B cell (primary cell): ENCODE measurements at regions of chr11 and their contacts with region 1.

Region 1: DNA sequence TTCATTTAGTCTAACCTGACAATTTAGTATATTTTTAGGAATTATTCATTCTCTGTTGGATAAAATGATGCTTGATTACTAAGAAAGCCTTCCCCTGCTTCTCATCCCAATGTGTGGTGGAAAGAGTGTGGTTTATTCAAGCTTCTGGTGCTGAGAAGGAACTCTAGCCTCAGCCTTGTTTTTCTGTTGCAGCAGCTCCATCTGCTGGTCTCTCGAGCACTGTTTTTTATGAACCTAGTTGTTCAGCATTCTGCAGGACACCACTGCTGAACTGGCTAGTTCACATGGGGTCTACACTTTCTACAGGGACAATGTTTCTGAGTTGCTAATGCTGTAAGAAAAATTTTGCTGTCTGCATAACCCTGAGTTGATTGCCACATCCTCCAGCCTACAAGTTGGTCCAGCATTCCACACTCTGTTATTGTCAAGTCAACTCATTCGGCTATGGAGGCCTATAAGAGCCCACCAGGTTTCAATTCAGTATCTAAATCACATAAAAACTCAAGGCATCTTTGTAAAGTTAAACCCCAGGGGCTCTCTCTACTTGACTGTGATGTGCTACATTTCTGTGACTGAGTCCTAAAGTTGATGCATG is 14.3 kb downstream of the OR2AG2 start:
- DNase-seq: peak; percentile 75
- ATAC-seq: peak; percentile 67
- H3K4me3 ChIP-seq: no peak overlapping the region
- H3K4me3 Mint-ChIP-seq: no peak overlapping the region
- H3K27ac ChIP-seq: no peak overlapping the region
- H3K27ac Mint-ChIP-seq: no peak overlapping the region
- H3K4me1 ChIP-seq: no peaks in the 10 kb centered on the region
- H3K4me1 Mint-ChIP-seq: peaks cover 2% of the 10 kb centered on the region
- H3K27me3 ChIP-seq: peaks cover 0 to 5% (median 0%) of the 10 kb centered on the region in 4 experiments
- H3K27me3 Mint-ChIP-seq: peaks cover 9% of the 10 kb centered on the region
- CTCF ChIP-seq: peak; percentile 77

Region 2: DNA sequence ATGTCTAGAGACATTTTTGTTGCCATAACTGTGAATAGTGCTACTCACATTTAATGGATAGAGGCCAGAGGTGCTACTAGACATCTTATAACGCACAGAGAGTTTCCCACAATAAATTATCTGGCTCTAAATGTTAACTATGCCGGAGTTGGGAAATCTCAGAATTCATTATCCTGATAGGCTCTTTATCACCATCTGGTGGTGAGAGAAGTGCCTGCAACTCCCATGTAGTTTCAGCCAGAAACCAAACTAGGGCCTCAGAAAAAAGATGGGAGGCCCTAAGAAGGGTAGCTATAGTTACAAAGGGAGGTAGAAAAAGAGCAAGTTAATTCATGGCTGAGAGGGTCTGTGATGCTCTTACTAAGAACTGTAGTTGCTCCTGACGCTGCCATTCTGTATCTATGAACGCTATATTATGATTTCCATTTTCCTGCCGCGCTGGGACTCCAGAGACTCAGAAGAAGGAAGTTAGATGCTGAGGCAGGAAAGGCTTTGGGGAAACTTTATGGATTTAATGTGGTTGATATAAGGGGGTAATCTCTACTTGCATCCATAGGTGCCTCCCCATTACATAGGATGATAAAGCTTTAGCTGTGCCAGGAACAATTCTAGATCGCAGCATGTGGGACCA is 51.5 kb before region 1 on chr11:
- CTCF ChIA-PET with region 1: interaction called, 158 read pairs
- POLR2A ChIA-PET with region 1: no interaction called
- intact Hi-C with region 1: loop called (anchors 1 kb)
- DNase-seq: peak; percentile 62
- ATAC-seq: peak; percentile 78
- H3K4me3 ChIP-seq: no peak overlapping the region
- H3K4me3 Mint-ChIP-seq: no peak overlapping the region
- H3K27ac ChIP-seq: peak overlapping the region in 1 of 2 donors; percentile 35
- H3K27ac Mint-ChIP-seq: peak overlapping the region; percentile 60
- H3K4me1 ChIP-seq: peaks cover 0 to 4% of the 10 kb centered on the region in 2 donors
- H3K4me1 Mint-ChIP-seq: peaks cover 21% of the 10 kb centered on the region
- H3K27me3 ChIP-seq: no peaks in the 10 kb centered on the region
- H3K27me3 Mint-ChIP-seq: no peaks in the 10 kb centered on the region
- CTCF ChIP-seq: peak; percentile 95

Region 3: DNA sequence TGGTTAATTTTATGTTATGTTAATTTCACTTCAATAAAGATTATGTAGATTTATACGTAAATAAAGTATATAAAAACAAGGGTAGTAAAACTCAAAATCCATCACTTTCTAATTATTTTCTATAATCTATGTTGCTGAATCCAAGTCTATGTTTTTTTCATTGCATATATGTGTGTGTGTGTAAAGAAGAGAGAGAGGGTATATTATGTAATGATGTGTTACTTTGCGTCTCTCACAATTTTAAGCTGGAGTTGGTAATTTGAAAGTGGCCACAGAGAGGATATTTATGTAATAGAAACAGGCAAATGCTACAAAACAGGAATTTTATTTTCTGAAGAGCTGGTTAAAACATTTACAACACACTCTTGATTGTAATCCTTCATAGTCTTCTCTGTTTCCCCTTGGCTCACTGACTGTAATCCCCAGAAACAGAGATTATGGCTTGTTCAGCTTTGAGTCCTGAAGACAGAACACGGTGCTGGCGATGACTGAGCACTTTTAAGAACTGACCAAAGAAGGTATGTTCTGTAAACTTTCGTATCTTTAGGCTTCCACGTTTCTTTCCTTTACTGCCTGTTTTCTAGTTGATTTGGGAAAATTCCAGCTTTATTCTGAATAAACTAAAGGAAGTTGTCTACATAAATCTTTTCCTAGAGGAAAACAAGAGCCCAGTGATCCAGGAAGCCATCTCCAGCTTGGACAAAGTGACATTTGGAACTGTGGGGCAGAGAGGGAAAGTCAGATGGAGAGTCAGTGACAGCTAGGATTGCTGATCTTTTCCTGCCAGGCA is 29.3 kb before region 1 on chr11:
- CTCF ChIA-PET with region 1: interaction called, 760 read pairs
- POLR2A ChIA-PET with region 1: no interaction called
- intact Hi-C with region 1: no loop called
- DNase-seq: no peak
- ATAC-seq: no peak
- H3K4me3 ChIP-seq: no peak overlapping the region
- H3K4me3 Mint-ChIP-seq: no peak overlapping the region
- H3K27ac ChIP-seq: no peak overlapping the region
- H3K27ac Mint-ChIP-seq: peak overlapping the region; percentile 46
- H3K4me1 ChIP-seq: peaks cover 0 to 6% of the 10 kb centered on the region in 2 donors
- H3K4me1 Mint-ChIP-seq: peaks cover 52% of the 10 kb centered on the region
- H3K27me3 ChIP-seq: no peaks in the 10 kb centered on the region
- H3K27me3 Mint-ChIP-seq: no peaks in the 10 kb centered on the region
- CTCF ChIP-seq: no peak

Region 4: DNA sequence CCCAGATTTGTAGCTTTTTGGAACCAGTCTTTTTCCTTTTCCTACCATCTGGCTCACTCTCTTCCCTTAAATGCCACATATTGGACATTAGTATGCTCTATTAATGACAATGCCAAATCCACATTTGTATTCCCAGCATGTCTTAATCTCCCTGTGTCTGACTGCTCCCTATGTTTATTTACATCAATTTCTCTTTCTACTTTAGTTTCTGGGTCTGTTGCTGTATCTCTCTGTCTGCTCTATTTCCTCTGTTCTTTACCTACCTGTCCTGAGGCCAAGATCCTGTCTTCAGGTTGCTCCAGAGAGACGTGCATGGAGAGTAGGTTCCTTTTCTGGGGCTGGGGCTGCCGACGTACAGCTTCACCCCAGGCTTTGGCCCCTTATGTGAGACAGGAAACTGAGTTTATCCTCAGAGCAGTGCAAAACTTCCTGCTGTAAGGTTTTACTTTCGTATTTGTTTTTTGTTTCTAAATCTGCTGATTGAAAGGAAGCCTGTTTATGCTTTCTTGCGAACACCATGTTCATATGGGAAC is 11.3 kb before region 1 on chr11:
- CTCF ChIA-PET with region 1: interaction called, 760 read pairs
- POLR2A ChIA-PET with region 1: interaction called, 9 read pairs
- intact Hi-C with region 1: loop called (anchors 1 kb)
- DNase-seq: peak; percentile 74
- ATAC-seq: peak; percentile 84
- H3K4me3 ChIP-seq: peak overlapping the region; percentile 54 to 95 (median 80)
- H3K4me3 Mint-ChIP-seq: no peak overlapping the region
- H3K27ac ChIP-seq: peak overlapping the region; percentile 83 to 95
- H3K27ac Mint-ChIP-seq: no peak overlapping the region
- H3K4me1 ChIP-seq: peaks cover 49 to 58% of the 10 kb centered on the region in 2 donors
- H3K4me1 Mint-ChIP-seq: peaks cover 25% of the 10 kb centered on the region
- H3K27me3 ChIP-seq: no peaks in the 10 kb centered on the region
- H3K27me3 Mint-ChIP-seq: no peaks in the 10 kb centered on the region
- CTCF ChIP-seq: no peak

Region 5: GRCh38 chr11:6926208-6927029 is 168.9 kb after region 1 on chr11 and contains the start of gene ZNF215:
- CTCF ChIA-PET with region 1: no interaction called
- POLR2A ChIA-PET with region 1: no interaction called
- intact Hi-C with region 1: loop called (anchors 10 kb)
- DNase-seq: peak; percentile 32
- ATAC-seq: peak; percentile 67
- H3K4me3 ChIP-seq: peak within 1 kb of the TSS; percentile 50 to 77 (median 67)
- H3K4me3 Mint-ChIP-seq: peak within 1 kb of the TSS; percentile 96
- H3K27ac ChIP-seq: peak within 1 kb of the TSS in 1 of 2 donors; percentile 25
- H3K27ac Mint-ChIP-seq: peak within 1 kb of the TSS; percentile 59
- H3K4me1 ChIP-seq: peaks cover 11 to 19% of the 10 kb centered on the region in 2 donors
- H3K4me1 Mint-ChIP-seq: peaks cover 19% of the 10 kb centered on the region
- H3K27me3 ChIP-seq: peaks cover 0 to 22% (median 0%) of the 10 kb centered on the region in 4 experiments
- H3K27me3 Mint-ChIP-seq: no peaks in the 10 kb centered on the region
- CTCF ChIP-seq: no peak
- total RNA-seq, gene ZNF215: 2.0 and 2.8 TPM in 2 replicates